Heart right ventricle (tissue), 16 donors: ENCODE measurements at regions of chr5 and their contacts with region 1.

Region 1: GRCh38 chr5:141007791-141008190 is 41.5 kb downstream of the PCDHAC2 start:
- DNase-seq: no peak
- ATAC-seq: no peak
- H3K4me3 ChIP-seq: no peak overlapping the region
- H3K27ac ChIP-seq: no peak overlapping the region
- H3K4me1 ChIP-seq: no peaks in the 10 kb centered on the region
- H3K27me3 ChIP-seq: peaks cover 0 to 28% (median 17%) of the 10 kb centered on the region in 7 donors
- CTCF ChIP-seq: no peak

Region 2: GRCh38 chr5:140622301-140622700 is 385.5 kb before region 1 on chr5:
- intact Hi-C with region 1: no loop called
- DNase-seq: no peak
- ATAC-seq: peak in 2 of 8 donors; percentile 20 to 45
- H3K4me3 ChIP-seq: no peak overlapping the region
- H3K27ac ChIP-seq: peak overlapping the region in 1 of 10 donors; percentile 0
- H3K4me1 ChIP-seq: peaks cover 0 to 16% (median 0%) of the 10 kb centered on the region in 9 donors
- H3K27me3 ChIP-seq: peaks cover 0 to 23% (median 0%) of the 10 kb centered on the region in 7 donors
- CTCF ChIP-seq: no peak

Region 3: GRCh38 chr5:140996060-140996459 is 11.7 kb before region 1 on chr5:
- intact Hi-C with region 1: loop called in 1 of 10 experiments (anchors 1 kb)
- DNase-seq: no peak
- ATAC-seq: no peak
- H3K4me3 ChIP-seq: no peak overlapping the region
- H3K27ac ChIP-seq: no peak overlapping the region
- H3K4me1 ChIP-seq: no peaks in the 10 kb centered on the region
- H3K27me3 ChIP-seq: peaks cover 0 to 27% (median 14%) of the 10 kb centered on the region in 7 donors
- CTCF ChIP-seq: no peak

Region 4: GRCh38 chr5:141298376-141298775 is 290.6 kb after region 1 on chr5:
- intact Hi-C with region 1: no loop called
- DNase-seq: no peak
- ATAC-seq: no peak
- H3K4me3 ChIP-seq: no peak overlapping the region
- H3K27ac ChIP-seq: peak overlapping the region in 1 of 10 donors; percentile 48
- H3K4me1 ChIP-seq: peaks cover 0 to 7% (median 0%) of the 10 kb centered on the region in 9 donors
- H3K27me3 ChIP-seq: no peaks in the 10 kb centered on the region
- CTCF ChIP-seq: no peak